ENCODE measurements at regions of chr9 and their contacts with region 1.

Region 1: GRCh38 chr9:128034821-128035764 is 32.0 kb downstream of the NAIF1 start:
- DNase-seq: peak; percentile 82
- H3K4me3 ChIP-seq: no peak overlapping the region; a peak in 1 of 4 replicates
- H3K27ac ChIP-seq: no peak overlapping the region; a peak in 1 of 4 replicates
- H3K4me1 ChIP-seq: no peaks in the 10 kb centered on the region; a peak in 1 of 4 replicates
- H3K27me3 ChIP-seq: no peaks in the 10 kb centered on the region
- CTCF ChIP-seq: peak; percentile 72
- EP300 ChIP-seq: no peak
- RAD21 ChIP-seq: peak; percentile 96

Region 2: DNA sequence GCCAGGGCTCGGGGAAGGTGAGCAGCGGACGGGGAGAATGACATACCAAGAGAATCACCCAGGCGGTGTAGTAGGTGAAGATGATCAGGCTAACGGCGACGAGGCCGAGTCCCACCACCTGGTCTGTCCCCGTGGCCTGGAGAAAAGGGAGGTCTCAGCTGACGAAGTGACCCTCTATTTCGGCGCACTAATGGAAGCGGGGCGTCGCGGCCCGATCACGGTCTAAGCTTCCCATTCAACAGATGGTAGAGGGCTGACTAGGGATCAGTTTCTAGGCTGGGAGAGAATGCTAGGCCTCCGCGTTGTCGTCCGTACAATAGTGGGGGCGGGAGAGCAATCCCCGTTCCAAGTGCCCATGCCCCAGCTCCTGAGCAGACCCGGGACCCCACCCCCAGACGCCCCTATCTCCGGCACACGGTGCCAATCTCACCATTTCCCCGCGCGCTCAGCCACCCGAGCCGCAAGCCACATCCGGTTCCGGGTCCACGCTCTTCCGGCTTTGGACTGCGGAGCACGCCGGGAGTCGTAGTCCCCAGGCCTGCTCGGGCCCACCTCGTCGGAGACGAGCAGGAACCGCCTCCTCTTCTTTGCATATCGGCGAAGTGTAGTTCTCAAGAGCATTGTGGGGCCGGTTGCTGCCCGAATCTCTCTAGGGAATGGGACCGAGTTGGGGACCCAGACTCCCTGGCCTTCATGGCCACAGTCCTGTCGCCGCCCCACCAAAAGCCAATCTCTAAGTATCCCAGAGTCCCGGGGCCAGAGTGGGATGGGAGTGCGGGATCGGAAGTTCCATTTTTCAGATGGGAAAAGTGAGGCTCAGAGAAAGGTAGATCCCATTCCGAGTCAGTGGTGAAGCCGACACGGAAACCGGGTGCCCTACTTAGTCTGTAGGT is 97.5 kb before region 1 on chr9 and contains the start of gene DPM2:
- CTCF ChIA-PET with region 1: interaction called, 219 read pairs
- POLR2A ChIA-PET with region 1: no interaction called
- DNase-seq: peak; percentile 93
- H3K4me3 ChIP-seq: peak within 1 kb of the TSS; percentile 78 to 95
- H3K27ac ChIP-seq: peak within 1 kb of the TSS; percentile 71 to 77
- H3K4me1 ChIP-seq: peaks cover 12 to 44% of the 10 kb centered on the region in 2 experiments
- H3K27me3 ChIP-seq: no peaks in the 10 kb centered on the region
- CTCF ChIP-seq: no peak
- EP300 ChIP-seq: no peak
- RAD21 ChIP-seq: no peak
- polyA plus RNA-seq, gene DPM2: 106 and 117 TPM in 2 replicates

Region 3: DNA sequence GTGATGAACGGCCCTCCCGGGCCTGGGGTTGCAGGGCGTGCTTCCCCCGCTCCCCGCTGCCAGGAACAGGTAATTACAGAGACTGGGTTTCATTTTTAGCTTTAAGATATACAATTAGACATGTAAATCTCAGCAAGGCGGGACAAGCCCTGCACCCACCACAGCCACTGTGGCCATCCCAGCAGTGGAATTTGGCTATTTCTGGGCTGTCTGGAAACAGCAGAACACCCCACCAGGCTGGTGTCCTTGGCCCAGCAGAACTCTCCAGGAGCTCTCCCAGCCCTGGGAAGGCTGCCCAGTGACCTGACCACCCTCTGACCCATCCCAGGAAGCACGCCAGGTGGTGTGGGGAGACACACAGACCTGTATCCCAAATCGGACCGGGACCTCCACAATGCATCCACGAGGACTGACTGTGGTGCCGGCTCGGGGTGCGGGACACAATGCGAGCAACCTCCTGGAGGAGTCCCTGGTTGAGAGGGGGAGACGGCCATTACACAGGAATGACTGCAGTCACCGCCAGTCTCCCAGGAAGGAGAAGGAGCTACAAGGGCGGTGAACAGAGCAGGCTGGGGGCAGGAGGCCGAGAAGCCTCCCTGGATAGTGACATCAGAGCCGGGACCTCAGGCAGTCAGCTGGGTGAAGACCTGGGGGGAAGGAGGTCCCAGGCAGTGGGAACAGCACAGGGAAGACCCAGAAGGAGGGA is 71.6 kb before region 1 on chr9:
- CTCF ChIA-PET with region 1: interaction called, 30 read pairs
- POLR2A ChIA-PET with region 1: no interaction called
- DNase-seq: no peak
- H3K4me3 ChIP-seq: no peak overlapping the region
- H3K27ac ChIP-seq: peak overlapping the region in 1 of 2 experiments; percentile 72; a peak in 3 of 4 replicates
- H3K4me1 ChIP-seq: peaks cover 56 to 80% of the 10 kb centered on the region in 2 experiments
- H3K27me3 ChIP-seq: no peaks in the 10 kb centered on the region
- CTCF ChIP-seq: no peak
- EP300 ChIP-seq: no peak
- RAD21 ChIP-seq: no peak

Region 4: GRCh38 chr9:127980706-127981558 is 54.2 kb before region 1 on chr9 and contains the start of gene EEIG1:
- CTCF ChIA-PET with region 1: interaction called, 51 read pairs
- POLR2A ChIA-PET with region 1: no interaction called
- DNase-seq: peak; percentile 98
- H3K4me3 ChIP-seq: peak within 1 kb of the TSS; percentile 72 to 96
- H3K27ac ChIP-seq: peak within 1 kb of the TSS; percentile 77 to 81
- H3K4me1 ChIP-seq: peaks cover 16 to 39% of the 10 kb centered on the region in 2 experiments; a peak in 3 of 4 replicates
- H3K27me3 ChIP-seq: no peaks in the 10 kb centered on the region
- CTCF ChIP-seq: no peak
- EP300 ChIP-seq: no peak
- RAD21 ChIP-seq: no peak
- polyA plus RNA-seq, gene EEIG1: 17.9 and 26.2 TPM in 2 replicates

Region 5: DNA sequence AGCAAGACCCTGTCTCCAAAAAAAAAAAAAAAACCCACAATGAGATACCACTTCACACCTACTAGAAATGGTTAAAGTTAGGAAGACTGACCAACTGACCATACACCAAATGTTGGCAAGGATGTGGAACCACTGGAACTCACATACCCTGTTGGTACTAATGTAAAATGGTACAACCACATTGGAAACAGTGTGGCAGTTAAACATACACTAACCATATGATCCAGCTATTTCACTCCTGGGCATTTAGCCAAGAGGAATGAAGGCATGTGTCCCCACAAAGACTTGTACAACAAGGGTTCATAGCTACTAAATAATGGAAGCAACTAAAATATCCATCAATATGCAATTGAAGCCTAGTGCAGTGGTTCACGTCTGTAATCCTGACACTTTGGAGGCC is 10.7 kb after region 1 on chr9:
- CTCF ChIA-PET with region 1: interaction called, 25 read pairs
- POLR2A ChIA-PET with region 1: no interaction called
- DNase-seq: peak; percentile 39
- H3K4me3 ChIP-seq: no peak overlapping the region
- H3K27ac ChIP-seq: peak overlapping the region; percentile 28 to 79; a peak in 3 of 4 replicates
- H3K4me1 ChIP-seq: peaks cover 5 to 19% of the 10 kb centered on the region in 2 experiments; a peak in 3 of 4 replicates
- H3K27me3 ChIP-seq: no peaks in the 10 kb centered on the region
- CTCF ChIP-seq: no peak
- EP300 ChIP-seq: no peak; a peak in 1 of 4 replicates
- RAD21 ChIP-seq: no peak

Measured in SK-N-SH (cell line).